ENCODE measurements at regions of chr17 and their contacts with region 1.

Region 1: GRCh38 chr17:61862975-61863800 is at the start of gene BRIP1:
- DNase-seq: peak; percentile 89 to 91
- H3K4me3 ChIP-seq: peak within 1 kb of the TSS; percentile 83
- H3K27ac ChIP-seq: peak within 1 kb of the TSS; percentile 71
- H3K4me1 ChIP-seq: peaks cover 30% of the 10 kb centered on the region
- H3K27me3 ChIP-seq: no peaks in the 10 kb centered on the region
- CTCF ChIP-seq: no peak
- total RNA-seq, gene BRIP1: 14.4 and 16.0 TPM in 2 replicates

Region 2: DNA sequence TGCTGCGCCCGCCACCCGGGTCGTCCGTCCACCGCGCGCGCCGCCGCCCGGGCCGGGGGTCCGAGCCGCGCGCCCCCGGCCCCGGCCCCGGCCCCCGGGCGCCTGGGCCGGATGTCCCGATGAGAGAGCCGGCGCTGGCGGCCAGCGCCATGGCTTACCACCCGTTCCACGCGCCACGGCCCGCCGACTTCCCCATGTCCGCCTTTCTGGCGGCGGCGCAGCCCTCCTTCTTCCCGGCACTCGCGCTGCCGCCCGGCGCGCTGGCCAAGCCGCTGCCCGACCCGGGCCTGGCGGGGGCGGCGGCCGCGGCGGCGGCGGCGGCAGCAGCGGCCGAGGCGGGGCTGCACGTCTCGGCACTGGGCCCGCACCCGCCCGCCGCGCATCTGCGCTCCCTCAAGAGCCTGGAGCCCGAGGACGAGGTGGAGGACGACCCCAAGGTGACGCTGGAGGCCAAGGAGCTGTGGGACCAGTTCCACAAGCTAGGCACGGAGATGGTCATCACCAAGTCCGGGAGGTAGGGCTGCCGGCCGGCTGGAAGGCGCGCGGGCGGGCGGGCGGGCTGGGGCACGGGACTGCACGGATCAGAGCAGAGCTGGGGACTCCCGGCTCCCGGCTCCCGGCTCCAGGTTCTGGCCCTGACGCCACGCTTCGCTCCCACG is 463.0 kb before region 1 on chr17:
- CTCF ChIA-PET with region 1: no interaction called
- POLR2A ChIA-PET with region 1: interaction called, 19 read pairs
- intact Hi-C with region 1: no loop called
- DNase-seq: peak; percentile 58 to 68
- H3K4me3 ChIP-seq: peak overlapping the region; percentile 45; the same call in 1 of the 2 replicates
- H3K27ac ChIP-seq: no peak overlapping the region
- H3K4me1 ChIP-seq: no peaks in the 10 kb centered on the region; the same call in 1 of the 2 replicates
- H3K27me3 ChIP-seq: no peaks in the 10 kb centered on the region
- CTCF ChIP-seq: no peak

Region 3: GRCh38 chr17:61647047-61647446 is 216.1 kb before region 1 on chr17:
- CTCF ChIA-PET with region 1: no interaction called
- POLR2A ChIA-PET with region 1: interaction called, 12 read pairs
- intact Hi-C with region 1: no loop called
- DNase-seq: no peak
- H3K4me3 ChIP-seq: no peak overlapping the region
- H3K27ac ChIP-seq: no peak overlapping the region
- H3K4me1 ChIP-seq: no peaks in the 10 kb centered on the region
- H3K27me3 ChIP-seq: no peaks in the 10 kb centered on the region
- CTCF ChIP-seq: no peak

Region 4: DNA sequence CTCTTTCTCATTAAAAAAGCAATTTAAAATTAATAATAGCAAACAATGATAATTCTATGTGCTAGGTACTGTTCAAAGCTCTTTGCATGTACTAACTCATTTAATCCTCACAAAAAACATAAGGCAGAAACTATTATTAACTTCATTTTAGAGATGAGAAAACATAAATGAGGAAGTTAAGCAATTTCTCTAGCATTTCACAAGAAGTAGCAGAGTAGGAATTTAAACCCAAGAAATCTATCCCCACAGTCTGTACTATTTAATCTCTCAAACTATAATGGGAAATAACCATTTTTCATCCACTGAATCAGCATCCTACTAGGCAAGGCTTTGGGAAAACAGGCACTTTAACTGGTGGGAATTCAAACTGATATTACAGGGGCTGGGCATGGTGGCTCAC is 106.8 kb after region 1 on chr17:
- CTCF ChIA-PET with region 1: no interaction called
- POLR2A ChIA-PET with region 1: no interaction called
- intact Hi-C with region 1: no loop called
- DNase-seq: no peak
- H3K4me3 ChIP-seq: no peak overlapping the region
- H3K27ac ChIP-seq: no peak overlapping the region
- H3K4me1 ChIP-seq: no peaks in the 10 kb centered on the region
- H3K27me3 ChIP-seq: no peaks in the 10 kb centered on the region
- CTCF ChIP-seq: no peak

Region 5: GRCh38 chr17:63024716-63025115 is 1161.5 kb after region 1 on chr17:
- CTCF ChIA-PET with region 1: no interaction called
- POLR2A ChIA-PET with region 1: no interaction called
- intact Hi-C with region 1: no loop called
- DNase-seq: no peak
- H3K4me3 ChIP-seq: no peak overlapping the region
- H3K27ac ChIP-seq: no peak overlapping the region
- H3K4me1 ChIP-seq: no peaks in the 10 kb centered on the region
- H3K27me3 ChIP-seq: no peaks in the 10 kb centered on the region
- CTCF ChIP-seq: no peak

Measured in PC-9 (cell line).